ENCODE measurements at regions of chr2 and their contacts with region 1.

Region 1: DNA sequence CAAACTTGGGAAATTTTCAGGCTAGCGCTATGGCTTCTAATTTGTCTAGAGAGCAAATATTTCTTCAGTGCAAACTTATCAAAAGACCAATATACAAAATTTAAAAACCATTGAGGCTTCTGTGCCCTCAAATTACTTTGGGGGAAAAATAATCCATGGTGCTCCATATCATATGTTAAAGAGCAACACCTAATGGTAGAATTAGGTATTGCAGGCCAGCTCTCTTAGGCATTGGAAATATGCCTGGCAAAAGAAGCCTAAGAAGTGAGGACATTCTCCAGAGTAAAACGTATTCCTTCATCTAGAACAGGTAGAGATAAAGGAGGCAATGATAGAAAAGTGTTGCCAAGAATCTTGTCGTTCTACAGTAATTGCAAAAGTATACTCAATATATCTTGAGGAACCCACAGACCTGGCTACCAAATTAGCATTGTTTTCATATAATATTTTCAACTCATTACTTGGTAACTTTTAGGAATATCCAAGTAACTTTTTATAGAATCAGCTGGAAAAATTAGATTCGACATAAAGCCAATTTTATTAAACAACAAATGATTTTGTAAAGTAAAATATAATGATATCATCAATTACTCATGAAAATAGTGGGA is 401.1 kb downstream of the BCL11A start:
- DNase-seq: peak in 5 of 9 donors; percentile 9 to 36 (median 20)
- ATAC-seq: peak; percentile 49
- H3K4me3 ChIP-seq: no peak overlapping the region
- H3K4me3 Mint-ChIP-seq: no peak overlapping the region
- H3K27ac ChIP-seq: no peak overlapping the region
- H3K27ac Mint-ChIP-seq: no peak overlapping the region
- H3K4me1 ChIP-seq: no peaks in the 10 kb centered on the region
- H3K4me1 Mint-ChIP-seq: peaks cover 0 to 9% (median 4%) of the 10 kb centered on the region in 7 donors
- H3K27me3 ChIP-seq: no peaks in the 10 kb centered on the region
- H3K27me3 Mint-ChIP-seq: peaks cover 0 to 14% (median 7%) of the 10 kb centered on the region in 5 donors

Region 2: DNA sequence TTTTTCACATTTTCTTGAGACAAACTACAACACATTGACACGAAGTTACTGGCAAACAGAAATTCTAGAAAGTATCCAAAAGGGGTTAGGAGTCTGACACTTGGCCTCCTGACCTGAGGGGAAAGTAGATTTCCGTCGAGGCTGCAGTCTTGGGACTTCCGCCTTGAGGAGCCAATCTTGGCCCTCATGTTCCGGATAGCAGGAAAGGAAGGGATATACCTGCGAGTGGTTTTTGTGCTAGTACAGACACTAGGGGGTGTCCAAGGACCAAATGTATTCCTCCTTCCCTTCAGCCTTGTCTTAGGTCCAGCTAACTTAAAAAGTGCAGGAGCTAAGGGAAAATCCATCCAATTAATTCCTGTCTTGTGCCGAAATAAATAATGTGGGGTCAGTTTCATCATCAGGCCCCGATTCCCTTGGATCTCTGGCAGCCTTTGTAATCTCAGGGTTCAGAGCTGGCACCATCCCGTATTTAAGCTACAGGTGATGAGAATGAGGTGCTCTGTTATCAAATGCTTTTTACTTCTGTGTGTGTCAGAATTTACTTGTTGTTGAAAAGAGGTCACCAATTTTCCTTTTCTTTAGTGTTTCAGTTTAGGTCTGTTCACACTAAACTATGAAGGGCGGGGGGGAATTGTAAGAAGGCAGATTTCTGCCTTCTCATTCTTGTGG is 1581.0 kb before region 1 on chr2:
- CTCF ChIA-PET with region 1: no interaction called
- POLR2A ChIA-PET with region 1: no interaction called
- intact Hi-C with region 1: loop called in 1 of 2 experiments (anchors 2 kb)
- DNase-seq: no peak
- ATAC-seq: peak; percentile 54
- H3K4me3 ChIP-seq: no peak overlapping the region
- H3K4me3 Mint-ChIP-seq: no peak overlapping the region
- H3K27ac ChIP-seq: no peak overlapping the region
- H3K27ac Mint-ChIP-seq: peak overlapping the region in 1 of 9 donors; percentile 20
- H3K4me1 ChIP-seq: no peaks in the 10 kb centered on the region
- H3K4me1 Mint-ChIP-seq: peaks cover 0 to 25% (median 11%) of the 10 kb centered on the region in 7 donors
- H3K27me3 ChIP-seq: no peaks in the 10 kb centered on the region
- H3K27me3 Mint-ChIP-seq: peaks cover 0 to 7% (median 3%) of the 10 kb centered on the region in 5 donors

Region 3: DNA sequence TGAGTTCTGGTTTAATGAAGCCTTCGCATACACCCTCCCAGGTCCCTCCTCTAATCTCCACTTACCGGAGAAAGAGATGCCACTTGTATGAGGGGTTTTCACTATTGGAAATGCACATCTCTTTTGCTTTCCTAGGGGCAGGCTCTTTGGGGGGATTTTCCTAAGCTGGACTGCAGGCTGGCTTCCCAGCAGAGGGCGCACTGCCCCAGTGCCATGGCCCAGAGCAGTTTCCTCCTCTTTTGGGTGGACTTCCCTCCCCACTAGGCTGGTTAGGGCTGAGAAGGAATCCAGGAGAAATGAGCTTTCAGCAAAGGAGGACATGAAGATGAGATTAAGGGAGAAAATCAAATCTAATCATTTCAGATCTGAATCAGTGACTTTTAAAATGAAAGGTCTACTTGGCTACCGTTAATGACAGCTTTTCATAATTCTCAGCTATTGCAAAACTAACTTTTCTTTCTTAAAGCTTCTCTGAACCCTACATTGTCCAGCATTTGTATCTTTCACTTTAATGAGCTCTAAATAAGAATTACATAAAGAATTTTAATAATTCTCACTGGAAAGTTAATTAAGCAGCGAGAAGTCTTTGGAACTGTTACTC is 1127.1 kb before region 1 on chr2:
- CTCF ChIA-PET with region 1: interaction called, 3 read pairs
- POLR2A ChIA-PET with region 1: no interaction called
- intact Hi-C with region 1: loop called in 1 of 2 experiments (anchors 2 kb)
- DNase-seq: peak in 2 of 9 donors; percentile 6 to 14
- ATAC-seq: peak; percentile 63
- H3K4me3 ChIP-seq: no peak overlapping the region
- H3K4me3 Mint-ChIP-seq: no peak overlapping the region
- H3K27ac ChIP-seq: no peak overlapping the region
- H3K27ac Mint-ChIP-seq: no peak overlapping the region
- H3K4me1 ChIP-seq: no peaks in the 10 kb centered on the region
- H3K4me1 Mint-ChIP-seq: peaks cover 0 to 3% (median 0%) of the 10 kb centered on the region in 7 donors
- H3K27me3 ChIP-seq: no peaks in the 10 kb centered on the region
- H3K27me3 Mint-ChIP-seq: peaks cover 0 to 9% (median 0%) of the 10 kb centered on the region in 5 donors

Region 4: GRCh38 chr2:60028849-60029565 is 123.3 kb before region 1 on chr2:
- CTCF ChIA-PET with region 1: no interaction called
- POLR2A ChIA-PET with region 1: no interaction called
- intact Hi-C with region 1: no loop called
- DNase-seq: peak in 1 of 9 donors; percentile 1
- ATAC-seq: no peak
- H3K4me3 ChIP-seq: no peak overlapping the region
- H3K4me3 Mint-ChIP-seq: peak overlapping the region in 3 of 10 donors; percentile 1 to 51 (median 5)
- H3K27ac ChIP-seq: no peak overlapping the region
- H3K27ac Mint-ChIP-seq: peak overlapping the region in 3 of 9 donors; percentile 32 to 64 (median 61)
- H3K4me1 ChIP-seq: no peaks in the 10 kb centered on the region
- H3K4me1 Mint-ChIP-seq: peaks cover 0 to 13% (median 8%) of the 10 kb centered on the region in 7 donors
- H3K27me3 ChIP-seq: no peaks in the 10 kb centered on the region
- H3K27me3 Mint-ChIP-seq: no peaks in the 10 kb centered on the region

Region 5: DNA sequence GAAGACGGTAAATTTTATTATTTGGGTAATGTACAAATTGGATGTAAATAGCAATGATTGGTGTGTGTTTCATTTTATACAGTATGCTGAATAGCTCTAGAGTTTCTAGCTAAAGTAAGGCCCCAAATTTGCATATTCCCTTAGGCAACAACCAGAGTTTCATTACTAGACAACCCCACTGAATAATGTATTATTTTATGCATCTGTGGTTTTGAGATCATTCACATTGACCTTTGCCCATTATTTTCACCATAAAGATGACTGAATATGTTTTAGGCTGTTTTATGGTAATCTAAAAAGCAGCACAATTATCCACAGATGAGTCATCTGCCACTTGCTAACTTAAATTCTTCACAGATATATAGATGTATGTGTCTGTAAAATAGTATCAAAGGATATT is 965.2 kb after region 1 on chr2:
- CTCF ChIA-PET with region 1: no interaction called
- POLR2A ChIA-PET with region 1: no interaction called
- intact Hi-C with region 1: no loop called
- DNase-seq: no peak
- ATAC-seq: no peak
- H3K4me3 ChIP-seq: no peak overlapping the region
- H3K4me3 Mint-ChIP-seq: no peak overlapping the region
- H3K27ac ChIP-seq: no peak overlapping the region
- H3K27ac Mint-ChIP-seq: no peak overlapping the region
- H3K4me1 ChIP-seq: no peaks in the 10 kb centered on the region
- H3K4me1 Mint-ChIP-seq: peaks cover 0 to 1% (median 0%) of the 10 kb centered on the region in 7 donors
- H3K27me3 ChIP-seq: no peaks in the 10 kb centered on the region
- H3K27me3 Mint-ChIP-seq: no peaks in the 10 kb centered on the region

Region 6: DNA sequence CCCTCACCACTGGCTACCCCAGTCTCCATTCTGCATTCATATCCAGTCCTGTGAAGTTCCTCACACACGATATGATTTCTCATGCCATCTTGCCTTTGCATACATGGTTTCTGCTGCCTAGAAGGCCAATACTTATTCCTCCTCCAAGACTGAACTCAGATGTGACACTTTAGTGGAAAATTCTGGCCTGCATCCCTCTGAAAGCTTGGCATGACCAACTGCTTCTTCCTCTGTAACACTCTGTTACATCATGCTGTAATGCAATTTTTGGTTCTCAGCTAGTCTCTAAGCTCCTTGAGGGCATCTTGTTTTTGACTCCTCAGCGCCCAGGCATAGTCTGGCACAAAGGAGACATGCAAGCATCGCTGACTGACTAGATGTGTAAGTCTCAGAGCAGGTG is 1689.0 kb after region 1 on chr2:
- CTCF ChIA-PET with region 1: no interaction called
- POLR2A ChIA-PET with region 1: no interaction called
- intact Hi-C with region 1: no loop called
- DNase-seq: no peak
- ATAC-seq: no peak
- H3K4me3 ChIP-seq: no peak overlapping the region
- H3K4me3 Mint-ChIP-seq: no peak overlapping the region
- H3K27ac ChIP-seq: no peak overlapping the region
- H3K27ac Mint-ChIP-seq: peak overlapping the region in 1 of 9 donors; percentile 16
- H3K4me1 ChIP-seq: no peaks in the 10 kb centered on the region
- H3K4me1 Mint-ChIP-seq: peaks cover 0 to 6% (median 0%) of the 10 kb centered on the region in 7 donors
- H3K27me3 ChIP-seq: no peaks in the 10 kb centered on the region
- H3K27me3 Mint-ChIP-seq: no peaks in the 10 kb centered on the region